ENCODE measurements at regions of chr1 and their contacts with region 1.

Region 1: GRCh38 chr1:201085916-201086735 is 26.1 kb downstream of the CACNA1S start:
- DNase-seq: peak; percentile 97
- ATAC-seq: peak; percentile 98
- H3K4me3 ChIP-seq: no peak overlapping the region
- H3K27ac ChIP-seq: no peak overlapping the region
- H3K4me1 ChIP-seq: peaks cover 12% of the 10 kb centered on the region
- H3K27me3 ChIP-seq: peaks cover 24% of the 10 kb centered on the region
- CTCF ChIP-seq: peak; percentile 100

Region 2: GRCh38 chr1:200473698-200474371 is 612.3 kb before region 1 on chr1:
- CTCF ChIA-PET with region 1: no interaction called
- POLR2A ChIA-PET with region 1: interaction called, 13 read pairs
- intact Hi-C with region 1: no loop called
- DNase-seq: no peak
- ATAC-seq: no peak
- H3K4me3 ChIP-seq: no peak overlapping the region
- H3K27ac ChIP-seq: no peak overlapping the region
- H3K4me1 ChIP-seq: peaks cover 37% of the 10 kb centered on the region
- H3K27me3 ChIP-seq: no peaks in the 10 kb centered on the region
- CTCF ChIP-seq: no peak

Region 3: DNA sequence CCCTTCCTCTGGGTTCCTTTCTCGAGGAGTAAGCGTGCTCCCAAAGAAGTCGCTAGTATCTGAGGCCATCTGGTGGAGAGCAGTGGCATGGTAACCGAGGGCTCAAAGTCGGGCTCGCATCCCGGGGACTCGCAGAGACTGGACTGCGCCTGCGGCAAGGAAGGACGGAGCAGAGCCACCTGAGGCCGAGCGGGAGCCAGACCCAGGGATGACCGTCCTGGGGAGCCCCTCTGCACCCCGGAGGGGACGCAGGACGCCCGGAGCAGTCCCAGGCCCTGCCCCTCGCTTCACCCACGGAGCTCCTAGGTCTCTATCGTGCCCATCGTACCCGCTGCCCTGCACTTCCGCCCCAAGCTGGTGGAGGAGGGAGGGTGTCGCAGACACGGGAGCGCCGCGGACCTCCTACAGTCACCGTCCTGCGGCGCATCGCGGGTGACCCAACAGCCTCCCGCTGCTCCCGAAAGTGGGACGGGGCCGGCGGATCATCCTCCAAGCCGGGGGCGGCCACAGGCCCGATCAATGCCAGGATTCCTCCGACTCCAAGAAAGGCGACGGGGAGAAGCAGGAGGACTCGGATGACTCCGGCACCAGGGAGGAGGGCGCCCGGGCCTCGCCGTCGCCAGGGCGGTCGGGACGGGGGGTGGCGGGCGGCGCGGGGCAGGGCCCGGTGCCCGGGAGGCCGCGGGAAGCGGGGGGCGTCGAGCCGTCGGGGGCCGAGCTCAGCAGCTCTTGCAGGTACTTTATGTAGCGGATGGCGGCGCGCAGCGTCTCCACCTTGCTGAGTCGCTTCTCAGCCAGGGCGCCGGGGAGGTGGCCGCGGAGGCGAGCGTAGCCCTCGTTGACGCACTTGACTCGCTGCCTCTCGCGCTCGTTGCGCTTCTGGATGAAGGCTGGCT is 28.4 kb after region 1 on chr1:
- CTCF ChIA-PET with region 1: interaction called, 46 read pairs
- POLR2A ChIA-PET with region 1: interaction called, 3 read pairs
- intact Hi-C with region 1: loop called (anchors 1 kb)
- DNase-seq: peak; percentile 100
- ATAC-seq: peak; percentile 94
- H3K4me3 ChIP-seq: peak overlapping the region; percentile 73
- H3K27ac ChIP-seq: no peak overlapping the region
- H3K4me1 ChIP-seq: peaks cover 13% of the 10 kb centered on the region
- H3K27me3 ChIP-seq: no peaks in the 10 kb centered on the region
- CTCF ChIP-seq: peak; percentile 100

Region 4: GRCh38 chr1:201223852-201224665 is 137.9 kb after region 1 on chr1:
- CTCF ChIA-PET with region 1: interaction called, 3 read pairs
- POLR2A ChIA-PET with region 1: no interaction called
- intact Hi-C with region 1: loop called (anchors 1 kb)
- DNase-seq: no peak
- ATAC-seq: no peak
- H3K4me3 ChIP-seq: no peak overlapping the region
- H3K27ac ChIP-seq: no peak overlapping the region
- H3K4me1 ChIP-seq: peaks cover 3% of the 10 kb centered on the region
- H3K27me3 ChIP-seq: no peaks in the 10 kb centered on the region
- CTCF ChIP-seq: no peak

Region 5: DNA sequence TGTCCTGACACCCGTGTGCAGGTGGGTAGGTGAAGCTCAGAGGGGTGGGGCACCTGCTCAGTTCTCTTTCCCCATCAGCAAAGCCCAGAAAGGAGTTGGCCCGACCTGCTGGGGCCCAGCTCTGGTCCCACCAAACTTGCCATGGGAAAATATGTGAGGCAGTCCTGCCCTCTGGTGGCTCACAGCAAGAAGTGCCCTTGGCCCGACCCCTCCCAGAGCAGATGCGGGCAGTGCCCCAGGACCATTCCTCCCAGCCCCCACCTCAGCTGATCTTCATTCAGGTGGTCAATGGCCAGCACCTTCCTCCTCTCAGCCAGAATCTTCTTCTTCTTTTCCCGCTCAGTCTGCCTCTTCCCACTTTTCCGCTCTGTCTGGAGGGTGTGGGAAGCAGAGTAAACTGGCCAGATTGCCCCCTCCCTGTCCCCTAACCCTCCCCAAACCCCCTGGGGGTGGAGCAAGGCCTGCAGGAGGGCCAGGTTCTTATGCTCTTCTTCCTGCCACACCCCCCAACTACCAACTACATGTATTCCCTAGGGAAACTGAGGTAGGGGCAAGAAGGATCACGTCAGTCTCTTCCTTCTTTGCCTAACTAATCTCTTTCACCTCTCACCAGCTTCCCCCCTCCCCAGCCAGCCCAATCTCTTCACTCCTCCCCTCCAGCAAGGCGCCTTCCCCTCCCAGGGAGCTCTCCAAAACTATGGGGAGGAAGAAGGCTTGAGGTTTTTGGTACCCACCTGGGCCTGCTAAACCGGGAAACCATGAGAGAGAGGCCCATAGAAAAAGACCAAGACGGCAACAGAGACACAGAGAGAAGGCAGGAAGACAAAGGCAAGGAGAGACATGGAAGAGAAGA is 275.8 kb after region 1 on chr1:
- CTCF ChIA-PET with region 1: no interaction called
- POLR2A ChIA-PET with region 1: no interaction called
- intact Hi-C with region 1: loop called (anchors 5 kb)
- DNase-seq: peak; percentile 93
- ATAC-seq: peak; percentile 83
- H3K4me3 ChIP-seq: no peak overlapping the region
- H3K27ac ChIP-seq: no peak overlapping the region
- H3K4me1 ChIP-seq: no peaks in the 10 kb centered on the region
- H3K27me3 ChIP-seq: peaks cover 8% of the 10 kb centered on the region
- CTCF ChIP-seq: peak; percentile 100